ENCODE measurements at regions of chr7 and their contacts with region 1.

Region 1: GRCh38 chr7:71733107-71733870 is 601.3 kb downstream of the GALNT17 start:
- DNase-seq: peak; percentile 69 to 95 (median 88)

Region 2: DNA sequence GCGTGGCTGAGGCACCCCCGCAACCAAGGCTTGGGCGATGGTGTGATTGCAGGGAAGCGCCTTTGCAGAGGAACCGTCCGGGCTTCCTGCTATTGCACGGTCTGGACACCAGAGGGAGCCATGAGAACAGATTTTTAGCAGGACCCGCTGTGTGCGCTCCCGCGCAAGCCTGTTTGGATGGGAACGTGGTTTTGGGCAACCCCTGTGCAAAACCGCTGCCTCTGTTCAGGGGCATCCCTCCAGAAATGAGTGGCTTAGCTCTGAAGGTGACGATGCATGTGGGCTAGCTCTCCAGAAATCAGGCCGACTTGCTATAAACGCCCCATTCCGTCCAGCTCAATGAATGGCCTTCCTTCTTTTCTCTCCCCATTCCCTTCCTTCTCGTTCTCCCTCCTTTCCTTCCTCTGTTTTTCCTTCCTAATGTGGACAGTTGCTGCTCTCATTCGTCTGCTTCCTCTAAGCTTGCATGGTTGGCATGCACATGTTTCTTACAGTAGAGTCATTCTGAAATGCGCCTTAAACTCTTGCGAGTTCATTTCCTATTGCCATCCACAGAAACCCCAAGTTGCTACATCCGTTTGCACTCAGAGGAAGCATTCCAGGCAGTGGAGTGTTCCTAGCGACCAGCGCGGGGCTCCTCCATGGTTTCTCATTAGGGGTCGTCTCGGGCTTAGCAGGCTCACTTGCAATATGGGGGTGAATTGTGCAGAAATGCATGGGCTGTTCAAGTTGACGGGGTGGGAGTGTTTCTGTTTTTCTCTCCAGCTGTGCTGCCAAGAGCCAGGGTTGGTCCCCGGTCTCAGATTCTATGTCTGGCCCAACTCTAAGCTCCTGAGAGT is 903.8 kb before region 1 on chr7:
- intact Hi-C with region 1: loop called (anchors 10 kb)
- DNase-seq: peak; percentile 20 to 91 (median 76)

Region 3: DNA sequence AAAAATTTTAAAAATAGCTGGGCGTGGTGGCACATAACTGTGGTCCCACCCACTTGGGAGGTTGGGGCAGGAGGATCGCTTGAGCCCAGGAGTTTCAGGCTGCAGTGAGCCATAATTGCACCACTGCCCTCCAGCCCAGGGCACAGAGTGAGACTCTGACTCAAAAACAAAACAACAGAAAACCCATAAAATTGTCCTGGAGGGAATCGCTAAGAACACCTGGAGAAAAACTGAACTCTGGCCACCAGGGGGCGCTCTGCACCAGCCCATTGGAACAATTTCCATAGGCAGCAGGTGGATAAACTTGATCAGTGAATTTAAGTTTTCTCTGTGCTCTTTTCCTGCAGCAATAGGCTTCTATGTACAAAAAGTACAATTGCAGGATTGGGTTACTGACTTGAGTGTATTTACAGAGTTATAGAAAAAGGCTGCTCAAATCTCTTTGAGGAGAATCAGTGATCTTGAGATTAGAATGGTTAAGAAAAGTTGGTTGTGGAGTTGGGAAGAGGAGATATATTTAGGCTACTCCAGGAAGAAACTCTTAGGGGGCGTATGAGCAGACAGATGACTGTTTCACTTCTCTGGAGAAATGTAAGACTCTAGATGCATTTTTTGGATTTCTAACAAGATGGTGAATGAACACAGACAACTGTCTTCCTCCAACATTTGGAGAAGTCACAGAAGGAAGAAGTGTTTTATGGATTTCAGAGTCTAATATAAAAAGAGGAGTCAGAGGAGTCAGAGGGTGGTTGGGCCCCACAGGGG is 876.2 kb before region 1 on chr7:
- intact Hi-C with region 1: loop called (anchors 5 kb)
- DNase-seq: peak; percentile 48 to 93 (median 86)